AG04450 (cell line): ENCODE measurements at regions of chr18 and their contacts with region 1.

Region 1: GRCh38 chr18:58043491-58044379 is at the start of gene NEDD4L:
- DNase-seq: peak; percentile 65
- H3K4me3 ChIP-seq: peak within 1 kb of the TSS; percentile 78
- H3K27ac ChIP-seq: peak within 1 kb of the TSS; percentile 68
- H3K27me3 ChIP-seq: peaks cover 8% of the 10 kb centered on the region
- CTCF ChIP-seq: peak; percentile 86
- polyA plus RNA-seq, gene NEDD4L: 13.5 and 15.0 TPM in 2 replicates

Region 2: GRCh38 chr18:57759640-57760039 is 284.1 kb before region 1 on chr18:
- CTCF ChIA-PET with region 1: no interaction called
- POLR2A ChIA-PET with region 1: no interaction called
- DNase-seq: no peak
- H3K4me3 ChIP-seq: no peak overlapping the region
- H3K27ac ChIP-seq: no peak overlapping the region
- H3K27me3 ChIP-seq: no peaks in the 10 kb centered on the region
- CTCF ChIP-seq: no peak

Region 3: DNA sequence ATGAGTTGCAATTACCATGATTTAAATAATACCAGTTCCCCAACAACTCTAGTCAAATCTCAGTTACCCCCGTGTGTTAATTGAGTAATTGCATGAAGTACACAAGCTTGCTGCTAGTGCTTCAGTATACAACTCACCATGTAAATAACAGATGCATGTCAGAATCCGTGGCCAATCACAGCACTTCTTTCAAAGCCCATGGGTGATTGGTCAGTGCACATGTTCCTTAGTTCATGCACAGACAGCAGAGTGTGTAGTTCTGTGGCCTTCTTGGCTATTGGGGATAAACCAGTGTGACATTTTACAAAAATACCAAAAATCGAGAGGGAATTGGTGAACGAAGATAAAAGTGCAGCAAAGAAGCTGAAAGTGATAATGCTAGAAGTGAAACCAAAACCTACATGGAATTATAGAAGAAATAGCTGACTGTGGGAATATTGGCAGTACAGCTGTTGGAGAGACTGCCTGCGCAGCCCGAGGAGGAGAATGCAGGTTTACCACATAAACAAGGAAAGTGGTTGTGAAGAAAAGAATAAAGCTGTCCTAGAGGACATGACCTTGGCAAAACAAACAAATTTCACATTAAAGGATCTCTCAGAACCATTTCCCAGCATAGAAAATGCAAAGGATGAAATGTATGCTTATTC is 59.7 kb after region 1 on chr18:
- CTCF ChIA-PET with region 1: interaction called, 11 read pairs
- POLR2A ChIA-PET with region 1: no interaction called
- DNase-seq: no peak
- H3K4me3 ChIP-seq: peak overlapping the region; percentile 5; the same call in 1 of the 2 replicates
- H3K27ac ChIP-seq: no peak overlapping the region
- H3K27me3 ChIP-seq: no peaks in the 10 kb centered on the region
- CTCF ChIP-seq: no peak

Region 4: GRCh38 chr18:58117786-58118403 is 74.2 kb after region 1 on chr18:
- CTCF ChIA-PET with region 1: interaction called, 41 read pairs
- POLR2A ChIA-PET with region 1: interaction called, 3 read pairs
- DNase-seq: peak; percentile 84
- H3K4me3 ChIP-seq: no peak overlapping the region
- H3K27ac ChIP-seq: peak overlapping the region; percentile 61
- H3K27me3 ChIP-seq: peaks cover under 1% of the 10 kb centered on the region
- CTCF ChIP-seq: no peak

Region 5: DNA sequence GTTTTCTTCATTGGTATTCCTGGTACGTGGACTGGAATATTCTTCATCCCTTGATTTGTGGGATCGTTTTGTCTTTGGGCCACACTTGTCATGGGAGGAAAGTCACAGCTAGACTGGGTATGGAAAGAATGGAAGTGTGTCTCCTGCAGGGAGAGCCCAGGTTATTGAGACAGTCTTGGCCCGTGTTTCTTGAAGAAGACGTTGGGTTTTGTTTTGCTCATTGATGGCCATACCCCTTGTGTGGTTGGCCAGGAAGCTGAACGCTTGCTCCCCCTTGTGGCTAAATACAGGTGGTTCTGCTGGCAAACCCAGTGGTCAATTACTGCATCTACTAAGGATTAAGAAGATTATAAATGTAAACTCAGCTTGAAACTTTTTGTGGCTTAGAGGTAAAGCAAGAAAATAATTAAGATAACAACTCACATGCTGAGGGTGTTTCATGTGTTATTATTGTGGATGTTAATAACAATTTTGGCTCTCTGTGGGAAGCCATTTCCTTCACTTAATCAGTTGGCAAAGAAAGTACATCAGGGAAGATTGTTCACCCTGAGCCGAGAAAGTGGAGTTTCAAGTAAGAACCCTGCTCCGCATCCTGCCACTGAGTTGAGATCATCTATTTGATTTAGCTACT is 92.1 kb after region 1 on chr18:
- CTCF ChIA-PET with region 1: interaction called, 13 read pairs
- POLR2A ChIA-PET with region 1: no interaction called
- DNase-seq: peak; percentile 45
- H3K4me3 ChIP-seq: no peak overlapping the region
- H3K27ac ChIP-seq: no peak overlapping the region
- H3K27me3 ChIP-seq: no peaks in the 10 kb centered on the region
- CTCF ChIP-seq: peak; percentile 90

Region 6: GRCh38 chr18:58180738-58181353 is 137.1 kb after region 1 on chr18:
- CTCF ChIA-PET with region 1: interaction called, 15 read pairs
- POLR2A ChIA-PET with region 1: no interaction called
- DNase-seq: peak; percentile 16
- H3K4me3 ChIP-seq: no peak overlapping the region
- H3K27ac ChIP-seq: no peak overlapping the region
- H3K27me3 ChIP-seq: no peaks in the 10 kb centered on the region
- CTCF ChIP-seq: peak; percentile 84

Region 7: DNA sequence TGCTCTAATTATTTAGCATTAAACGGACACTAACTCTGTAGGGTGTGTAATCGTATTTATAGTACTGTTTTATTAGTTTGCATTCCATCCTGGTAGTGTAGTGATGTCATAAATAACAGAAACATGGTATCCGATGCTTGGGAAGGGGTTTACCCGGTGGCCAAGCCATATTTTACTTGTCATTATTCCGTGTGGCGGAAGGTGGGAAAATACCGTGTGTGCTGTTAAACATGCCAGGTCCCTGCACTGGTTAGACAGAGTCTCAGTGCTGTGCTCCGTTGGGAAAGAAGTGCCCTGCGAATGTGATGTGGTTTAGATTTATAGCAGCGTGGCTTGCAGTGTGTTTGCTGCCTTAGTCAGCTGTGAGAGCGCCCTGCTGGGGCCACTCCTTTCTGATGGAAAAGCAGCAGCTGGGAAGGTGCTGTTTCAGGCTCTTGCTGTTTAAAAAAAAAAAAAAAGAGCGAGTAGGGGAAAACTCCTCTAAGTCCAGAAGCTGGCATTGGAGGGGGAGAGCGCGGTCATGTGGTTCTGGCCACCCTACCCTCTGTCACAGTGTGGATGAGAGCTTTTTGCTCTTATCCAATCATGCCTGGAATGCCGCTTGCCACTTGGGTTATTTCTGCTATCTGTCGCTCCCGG is 211.3 kb after region 1 on chr18:
- CTCF ChIA-PET with region 1: interaction called, 10 read pairs
- POLR2A ChIA-PET with region 1: no interaction called
- DNase-seq: no peak
- H3K4me3 ChIP-seq: no peak overlapping the region
- H3K27ac ChIP-seq: no peak overlapping the region
- H3K27me3 ChIP-seq: no peaks in the 10 kb centered on the region
- CTCF ChIP-seq: no peak